Gastrocnemius medialis (tissue), 4 donors: ENCODE measurements at regions of chr22 and their contacts with region 1.

Region 1: DNA sequence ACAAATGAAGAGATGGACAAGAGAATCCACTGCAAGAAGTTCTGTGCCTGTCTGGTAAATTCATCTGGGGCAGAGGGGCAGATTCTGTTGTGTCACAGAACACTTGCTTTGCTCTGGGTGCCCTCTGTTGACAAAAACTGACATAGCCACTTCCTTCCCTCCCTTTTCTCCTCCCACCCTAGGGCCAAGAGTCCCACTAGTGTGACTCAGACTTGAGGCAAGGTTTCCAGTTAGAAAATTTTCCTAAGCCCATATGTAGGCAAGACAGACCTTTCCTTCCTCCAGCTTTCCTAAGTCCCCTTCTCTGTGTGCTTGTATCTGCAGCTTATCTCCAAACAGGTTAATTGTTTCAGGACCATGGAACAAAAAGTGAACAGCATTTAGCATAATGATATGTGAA is 106.8 kb downstream of the RBFOX2 start:
- DNase-seq: peak; percentile 50 to 82
- ATAC-seq: peak; percentile 93 to 99
- H3K4me3 ChIP-seq: no peak overlapping the region
- H3K27ac ChIP-seq: peak overlapping the region; percentile 55 to 79 (median 62)
- H3K4me1 ChIP-seq: peaks cover 37 to 49% of the 10 kb centered on the region in 2 donors
- H3K27me3 ChIP-seq: no peaks in the 10 kb centered on the region
- CTCF ChIP-seq: peak; percentile 40 to 79 (median 66)
- POLR2A ChIP-seq: no peak

Region 2: DNA sequence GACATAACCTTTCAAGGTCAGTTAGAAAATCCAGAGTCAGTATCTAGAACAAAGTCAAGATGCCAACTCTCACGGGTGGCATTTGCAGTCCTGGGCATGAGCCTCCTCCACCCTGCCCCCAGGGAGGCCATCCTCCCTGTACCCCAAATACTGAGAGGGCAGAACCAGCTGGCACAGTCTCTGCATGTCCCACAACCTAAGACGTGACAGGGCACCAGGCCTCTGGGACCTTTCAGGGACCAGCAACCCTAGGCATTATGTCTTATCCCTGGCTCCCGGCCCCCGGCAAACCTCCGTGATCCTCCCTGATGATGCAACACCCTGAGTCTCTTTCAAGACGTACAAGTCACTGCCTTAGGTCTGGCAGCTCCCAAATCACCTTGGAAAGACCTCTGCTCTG is 306.6 kb before region 1 on chr22:
- in situ Hi-C with region 1: no loop called
- intact Hi-C with region 1: no loop called
- DNase-seq: peak; percentile 72 to 96
- ATAC-seq: peak; percentile 33 to 50
- H3K4me3 ChIP-seq: peak overlapping the region; percentile 26 to 56 (median 50)
- H3K27ac ChIP-seq: peak overlapping the region; percentile 92 to 97 (median 97)
- H3K4me1 ChIP-seq: peaks cover 66 to 70% of the 10 kb centered on the region in 2 donors
- H3K27me3 ChIP-seq: no peaks in the 10 kb centered on the region
- CTCF ChIP-seq: no peak
- POLR2A ChIP-seq: peak in 1 of 2 donors; percentile 55

Region 3: DNA sequence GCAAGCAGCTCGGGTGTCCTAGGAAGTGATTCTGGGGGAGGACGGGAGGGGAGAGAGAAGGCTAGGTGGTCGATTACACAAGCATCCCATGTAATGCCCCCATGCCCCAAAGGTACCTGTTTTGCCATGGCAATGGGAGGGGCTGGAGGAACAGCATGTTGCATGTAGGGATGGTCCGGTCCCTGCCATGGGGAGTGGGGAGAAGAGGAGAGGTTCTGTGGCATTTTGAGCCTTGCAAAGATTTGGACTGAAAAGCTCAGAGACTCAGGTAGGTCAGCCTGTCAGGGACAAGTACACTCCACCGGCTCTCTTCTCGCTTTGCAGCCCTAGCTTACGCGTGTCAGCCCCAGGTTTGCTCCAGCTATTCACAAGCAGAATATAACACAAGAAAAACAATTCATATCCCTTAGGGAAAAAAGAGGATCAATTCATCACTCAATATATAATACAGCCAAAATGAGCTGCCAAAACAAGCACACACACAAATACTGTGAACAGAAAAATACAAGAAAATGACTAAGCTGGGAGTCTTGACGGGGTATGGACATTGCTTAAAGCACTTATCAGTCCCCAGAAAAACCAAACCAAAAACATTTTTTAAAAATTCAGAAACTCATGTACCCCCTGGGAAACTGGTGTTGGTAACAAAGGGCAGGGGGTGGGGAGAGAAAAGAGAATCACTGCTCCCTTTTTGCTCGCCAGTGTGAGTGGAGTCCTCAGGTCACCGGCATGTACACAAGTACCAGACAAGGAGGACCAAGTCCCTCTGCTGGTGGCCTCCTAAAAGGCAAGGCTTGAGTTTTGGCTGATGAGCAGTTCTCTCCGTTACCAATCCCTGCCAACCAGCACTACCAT is 182.5 kb before region 1 on chr22:
- in situ Hi-C with region 1: no loop called
- intact Hi-C with region 1: loop called (anchors 5 kb)
- DNase-seq: peak in 1 of 2 donors; percentile 48
- ATAC-seq: peak; percentile 28 to 35
- H3K4me3 ChIP-seq: no peak overlapping the region
- H3K27ac ChIP-seq: peak overlapping the region; percentile 46 to 87 (median 82)
- H3K4me1 ChIP-seq: peaks cover 45 to 46% of the 10 kb centered on the region in 2 donors
- H3K27me3 ChIP-seq: no peaks in the 10 kb centered on the region
- CTCF ChIP-seq: peak in 4 of 5 experiments; percentile 22 to 62 (median 42)
- POLR2A ChIP-seq: no peak

Region 4: GRCh38 chr22:35761037-35761436 is 160.7 kb before region 1 on chr22:
- in situ Hi-C with region 1: loop called in 2 of 4 experiments (anchors 25 kb)
- intact Hi-C with region 1: loop called (anchors 1 kb)
- DNase-seq: no peak
- ATAC-seq: no peak
- H3K4me3 ChIP-seq: no peak overlapping the region
- H3K27ac ChIP-seq: peak overlapping the region in 1 of 4 donors; percentile 8
- H3K4me1 ChIP-seq: peaks cover 2 to 3% of the 10 kb centered on the region in 2 donors
- H3K27me3 ChIP-seq: no peaks in the 10 kb centered on the region
- CTCF ChIP-seq: peak in 4 of 5 experiments; percentile 13 to 62 (median 23)
- POLR2A ChIP-seq: no peak

Region 5: DNA sequence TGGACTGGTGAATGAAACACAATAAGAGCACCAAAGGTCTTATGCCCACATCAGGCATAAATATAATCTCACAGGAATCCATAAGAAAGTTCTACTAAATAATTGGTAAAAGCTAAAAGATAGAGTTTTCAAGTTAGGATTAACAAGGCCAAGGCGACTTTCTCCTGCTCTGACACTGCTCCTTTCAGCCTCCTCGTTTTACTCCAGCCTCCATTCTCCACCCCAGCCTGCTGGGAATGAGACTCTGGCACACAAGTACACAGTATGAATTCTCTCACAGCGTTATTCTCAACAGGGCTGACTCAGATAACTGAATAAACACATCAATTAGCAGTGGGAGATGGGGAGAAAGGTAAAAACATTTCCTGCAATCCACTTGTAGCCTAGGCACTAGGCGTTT is 109.2 kb before region 1 on chr22:
- in situ Hi-C with region 1: no loop called
- intact Hi-C with region 1: no loop called
- DNase-seq: no peak
- ATAC-seq: no peak
- H3K4me3 ChIP-seq: no peak overlapping the region
- H3K27ac ChIP-seq: peak overlapping the region in 3 of 4 donors; percentile 1 to 51 (median 47)
- H3K4me1 ChIP-seq: peaks cover 29 to 31% of the 10 kb centered on the region in 2 donors
- H3K27me3 ChIP-seq: no peaks in the 10 kb centered on the region
- CTCF ChIP-seq: no peak
- POLR2A ChIP-seq: no peak

Region 6: GRCh38 chr22:35977136-35977535 is 55.4 kb after region 1 on chr22:
- in situ Hi-C with region 1: no loop called
- intact Hi-C with region 1: no loop called
- DNase-seq: no peak
- ATAC-seq: no peak
- H3K4me3 ChIP-seq: no peak overlapping the region
- H3K27ac ChIP-seq: no peak overlapping the region
- H3K4me1 ChIP-seq: peaks cover 23 to 40% of the 10 kb centered on the region in 2 donors
- H3K27me3 ChIP-seq: no peaks in the 10 kb centered on the region
- CTCF ChIP-seq: no peak
- POLR2A ChIP-seq: no peak

Region 7: GRCh38 chr22:36506637-36507517 is 585.1 kb after region 1 on chr22 and contains the start of gene FOXRED2:
- in situ Hi-C with region 1: no loop called
- intact Hi-C with region 1: no loop called
- DNase-seq: peak; percentile 72 to 84
- ATAC-seq: peak; percentile 80 to 81
- H3K4me3 ChIP-seq: peak within 1 kb of the TSS; percentile 55 to 65 (median 60)
- H3K27ac ChIP-seq: peak within 1 kb of the TSS; percentile 77 to 91 (median 80)
- H3K4me1 ChIP-seq: peaks cover 5 to 17% of the 10 kb centered on the region in 2 donors
- H3K27me3 ChIP-seq: no peaks in the 10 kb centered on the region
- CTCF ChIP-seq: no peak
- POLR2A ChIP-seq: peak; percentile 75 to 85
- total RNA-seq, gene FOXRED2: 2.6 to 13.6 (median 5.1) TPM